SK-N-SH (cell line): ENCODE measurements at regions of chr10 and their contacts with region 1.

Region 1: DNA sequence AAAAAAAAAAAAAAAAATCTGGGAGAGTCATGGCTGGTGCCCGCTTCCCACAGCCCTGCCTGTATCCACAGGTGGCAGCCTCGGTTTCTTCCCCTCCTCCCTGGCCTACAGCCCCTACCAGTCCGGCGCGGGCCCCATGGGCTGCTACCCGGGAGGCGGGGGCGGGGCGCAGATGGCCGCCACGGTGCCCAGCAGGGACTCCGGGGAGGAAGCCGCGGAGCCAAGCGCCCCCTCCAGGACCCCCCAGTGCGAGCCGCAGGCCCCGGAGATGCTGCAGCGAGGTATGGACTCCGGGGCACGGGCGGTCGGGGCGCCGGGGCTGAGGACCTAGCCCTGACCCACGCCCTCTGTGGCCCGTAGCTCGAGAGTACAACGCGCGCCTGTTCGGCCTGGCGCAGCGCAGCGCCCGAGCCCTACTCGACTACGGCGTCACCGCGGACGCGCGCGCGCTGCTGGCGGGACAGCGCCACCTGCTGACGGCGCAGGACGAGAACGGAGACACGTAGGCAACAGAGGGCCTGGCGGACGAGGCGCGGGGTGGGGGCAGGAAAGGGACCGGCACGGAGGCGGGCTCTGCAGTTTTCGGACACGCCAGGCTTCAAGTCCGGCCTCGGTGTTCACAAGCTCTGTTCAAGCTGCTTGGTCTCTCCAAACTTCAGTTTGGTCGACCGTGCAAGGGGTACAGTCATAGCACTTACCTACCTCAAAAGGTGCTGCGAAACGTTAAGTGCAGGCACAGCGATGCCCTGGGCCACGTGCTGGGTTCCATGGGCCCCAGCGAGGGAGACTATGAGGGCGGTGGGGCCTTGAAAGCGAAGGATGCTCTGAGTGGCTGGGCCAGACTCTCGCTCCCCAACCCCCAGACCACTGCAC is 3.9 kb downstream of the NFKB2 start:
- DNase-seq: peak; percentile 95
- H3K4me3 ChIP-seq: peak overlapping the region; percentile 49 to 64
- H3K27ac ChIP-seq: peak overlapping the region in 1 of 2 experiments; percentile 71; a peak in 1 of 4 replicates
- H3K4me1 ChIP-seq: peaks cover 0 to 23% of the 10 kb centered on the region in 2 experiments; a peak in 1 of 4 replicates
- H3K27me3 ChIP-seq: no peaks in the 10 kb centered on the region
- CTCF ChIP-seq: peak; percentile 87
- EP300 ChIP-seq: no peak
- RAD21 ChIP-seq: peak; percentile 55

Region 2: DNA sequence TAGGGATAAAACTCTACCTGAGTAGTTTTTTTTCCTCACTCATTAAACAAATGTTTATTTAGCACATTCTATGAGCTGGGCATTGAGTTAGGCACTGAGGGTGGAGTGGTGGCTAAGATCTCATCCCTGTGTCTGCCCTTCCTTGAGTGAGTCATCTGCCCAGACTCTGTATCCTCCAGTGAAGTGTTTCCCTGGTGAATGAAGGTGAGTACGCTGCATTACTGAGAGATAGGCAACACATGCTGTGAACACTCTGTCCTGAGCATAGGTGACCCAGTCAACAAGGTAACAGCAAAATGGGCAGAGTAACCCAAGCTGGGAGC is 163.9 kb before region 1 on chr10:
- CTCF ChIA-PET with region 1: interaction called, 163 read pairs
- POLR2A ChIA-PET with region 1: no interaction called
- DNase-seq: no peak
- H3K4me3 ChIP-seq: no peak overlapping the region
- H3K27ac ChIP-seq: no peak overlapping the region
- H3K4me1 ChIP-seq: peaks cover 0 to 7% of the 10 kb centered on the region in 2 experiments; a peak in 1 of 4 replicates
- H3K27me3 ChIP-seq: peaks cover 10% of the 10 kb centered on the region; the same call in 1 of the 2 replicates
- CTCF ChIP-seq: no peak
- EP300 ChIP-seq: no peak
- RAD21 ChIP-seq: no peak

Region 3: DNA sequence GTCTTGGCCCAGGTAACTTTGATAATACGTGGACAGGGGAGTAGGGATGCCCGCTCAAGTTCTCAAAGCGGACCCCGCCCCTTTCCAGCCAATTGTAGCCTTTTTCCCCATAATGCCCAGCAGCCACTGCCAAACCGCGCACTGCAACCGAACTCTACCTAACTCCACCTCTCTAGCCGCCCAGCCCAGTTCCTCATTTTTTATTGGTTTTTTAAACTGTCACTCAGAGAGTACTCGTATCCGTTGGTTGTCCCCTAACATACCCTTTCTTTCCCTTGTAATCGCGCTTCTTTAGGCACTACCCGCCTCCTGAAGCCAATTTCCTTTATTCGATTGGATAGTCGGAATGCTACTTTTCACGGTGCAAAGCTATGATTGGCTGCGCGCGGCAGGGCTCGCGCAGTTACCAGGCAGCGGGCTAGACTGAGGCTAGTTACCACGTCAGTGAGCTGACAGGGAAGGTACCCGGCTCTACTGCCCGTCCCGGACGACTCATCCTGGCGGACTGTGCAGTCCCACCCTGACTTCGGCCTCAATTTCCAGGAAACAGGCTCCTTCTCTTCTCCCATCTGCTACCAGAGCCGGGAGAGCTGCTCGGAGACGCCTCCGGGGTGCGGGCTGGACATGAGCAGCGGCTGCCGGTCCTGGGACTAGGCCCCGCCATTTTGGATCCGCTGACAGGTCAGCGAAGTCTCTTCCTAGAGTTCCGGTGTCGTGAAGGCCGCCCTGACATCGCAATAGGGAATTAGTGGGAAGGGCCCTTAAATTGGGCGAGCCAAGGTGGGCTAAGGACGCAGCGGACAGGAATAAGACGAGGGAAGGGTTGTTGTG is 154.1 kb before region 1 on chr10 and contains the start of gene GBF1:
- CTCF ChIA-PET with region 1: interaction called, 11 read pairs
- POLR2A ChIA-PET with region 1: no interaction called
- DNase-seq: peak; percentile 94
- H3K4me3 ChIP-seq: peak within 1 kb of the TSS; percentile 86 to 94
- H3K27ac ChIP-seq: peak within 1 kb of the TSS; percentile 73 to 87; a peak in 3 of 4 replicates
- H3K4me1 ChIP-seq: peaks cover 12 to 34% of the 10 kb centered on the region in 2 experiments; a peak in 2 of 4 replicates
- H3K27me3 ChIP-seq: peaks cover 2% of the 10 kb centered on the region; the same call in 1 of the 2 replicates
- CTCF ChIP-seq: no peak
- EP300 ChIP-seq: peak in 1 of 2 experiments; percentile 73; a peak in 1 of 4 replicates
- RAD21 ChIP-seq: no peak
- polyA plus RNA-seq, gene GBF1: 11.4 and 12.3 TPM in 2 replicates

Region 4: GRCh38 chr10:102334101-102334500 is 65.4 kb before region 1 on chr10:
- CTCF ChIA-PET with region 1: no interaction called
- POLR2A ChIA-PET with region 1: no interaction called
- DNase-seq: peak; percentile 54
- H3K4me3 ChIP-seq: no peak overlapping the region
- H3K27ac ChIP-seq: no peak overlapping the region
- H3K4me1 ChIP-seq: peaks cover 0 to 6% of the 10 kb centered on the region in 2 experiments; a peak in 1 of 4 replicates
- H3K27me3 ChIP-seq: no peaks in the 10 kb centered on the region
- CTCF ChIP-seq: no peak
- EP300 ChIP-seq: no peak
- RAD21 ChIP-seq: no peak

Region 5: DNA sequence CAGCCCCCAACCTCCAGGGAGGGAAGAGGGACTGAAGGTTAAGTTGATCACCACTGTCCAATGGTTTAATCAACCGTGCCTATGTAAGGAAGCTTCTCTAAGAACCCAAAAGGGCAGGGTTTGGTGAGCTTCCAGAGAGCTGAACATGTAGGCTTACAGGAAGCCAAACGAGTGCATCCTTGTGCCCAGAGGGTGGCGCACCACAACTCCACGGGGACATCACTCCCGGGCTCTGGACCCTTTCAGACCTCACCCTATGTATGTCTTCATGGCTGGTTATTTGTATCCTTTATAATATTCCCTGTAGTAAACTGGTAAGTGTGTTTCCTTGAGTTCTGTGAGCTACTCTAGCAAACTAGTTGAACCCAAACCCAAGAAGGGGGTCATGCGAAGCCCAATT is 15.4 kb before region 1 on chr10:
- CTCF ChIA-PET with region 1: interaction called, 77 read pairs
- POLR2A ChIA-PET with region 1: no interaction called
- DNase-seq: no peak
- H3K4me3 ChIP-seq: no peak overlapping the region
- H3K27ac ChIP-seq: no peak overlapping the region
- H3K4me1 ChIP-seq: no peaks in the 10 kb centered on the region; a peak in 1 of 4 replicates
- H3K27me3 ChIP-seq: no peaks in the 10 kb centered on the region
- CTCF ChIP-seq: peak; percentile 18; the same call in 1 of the 2 replicates
- EP300 ChIP-seq: no peak
- RAD21 ChIP-seq: no peak

Region 6: DNA sequence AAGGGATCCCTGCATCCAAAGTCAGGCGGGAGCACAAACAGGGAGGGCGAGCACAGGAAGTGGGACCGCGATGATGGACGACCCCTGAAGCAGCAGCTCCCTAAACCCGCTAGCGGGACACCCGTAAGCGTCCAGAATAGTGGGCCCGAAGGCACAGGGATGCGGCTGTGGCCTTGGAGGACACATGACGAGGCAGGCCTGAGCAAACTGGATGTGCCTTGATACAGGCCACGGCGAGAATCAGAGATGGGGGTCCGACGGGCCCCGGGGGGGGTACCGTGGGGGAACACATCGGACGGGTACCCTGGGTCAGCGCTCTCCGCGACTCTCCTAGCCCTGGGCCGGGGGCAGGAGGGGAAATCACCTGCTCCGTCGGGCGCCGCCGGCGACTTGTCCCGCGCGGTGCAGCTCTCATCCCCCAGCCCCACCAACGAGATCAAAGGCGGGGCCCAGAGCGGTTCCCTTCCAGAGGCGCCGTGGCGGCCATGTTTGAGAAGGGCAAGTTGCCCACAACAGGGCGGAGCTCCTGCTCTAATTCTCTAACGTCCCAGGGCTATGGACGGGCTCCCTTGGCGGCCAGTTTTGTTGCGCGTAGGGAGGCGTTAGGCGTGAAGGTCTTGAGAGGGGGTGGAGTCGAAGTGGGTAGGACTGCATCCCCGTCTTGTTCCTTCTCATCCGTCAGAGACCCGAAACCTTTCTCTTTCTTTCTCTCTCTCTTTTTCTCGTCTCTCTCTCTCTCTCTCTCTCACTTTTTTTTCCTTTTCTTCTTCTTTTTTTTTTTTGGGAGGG is 32.9 kb after region 1 on chr10 and contains the start of gene CUEDC2:
- CTCF ChIA-PET with region 1: interaction called, 10 read pairs
- POLR2A ChIA-PET with region 1: interaction called, 4 read pairs
- DNase-seq: peak; percentile 94
- H3K4me3 ChIP-seq: peak within 1 kb of the TSS; percentile 82 to 93
- H3K27ac ChIP-seq: peak within 1 kb of the TSS; percentile 55 to 80; a peak in 3 of 4 replicates
- H3K4me1 ChIP-seq: peaks cover 0 to 6% of the 10 kb centered on the region in 2 experiments; a peak in 1 of 4 replicates
- H3K27me3 ChIP-seq: no peaks in the 10 kb centered on the region
- CTCF ChIP-seq: no peak
- EP300 ChIP-seq: peak in 1 of 2 experiments; percentile 8; a peak in 1 of 4 replicates
- RAD21 ChIP-seq: no peak
- polyA plus RNA-seq, gene CUEDC2: 130 and 162 TPM in 2 replicates

Region 7: GRCh38 chr10:102461187-102462054 is 62.0 kb after region 1 on chr10:
- CTCF ChIA-PET with region 1: interaction called, 16 read pairs
- POLR2A ChIA-PET with region 1: no interaction called
- DNase-seq: peak; percentile 99
- H3K4me3 ChIP-seq: peak overlapping the region; percentile 55 to 74
- H3K27ac ChIP-seq: peak overlapping the region in 1 of 2 experiments; percentile 58; a peak in 1 of 4 replicates
- H3K4me1 ChIP-seq: peaks cover 0 to 10% of the 10 kb centered on the region in 2 experiments; a peak in 1 of 4 replicates
- H3K27me3 ChIP-seq: no peaks in the 10 kb centered on the region
- CTCF ChIP-seq: no peak
- EP300 ChIP-seq: no peak
- RAD21 ChIP-seq: no peak